H1 (cell line): ENCODE measurements at regions of chr1 and their contacts with region 1.

Region 1: DNA sequence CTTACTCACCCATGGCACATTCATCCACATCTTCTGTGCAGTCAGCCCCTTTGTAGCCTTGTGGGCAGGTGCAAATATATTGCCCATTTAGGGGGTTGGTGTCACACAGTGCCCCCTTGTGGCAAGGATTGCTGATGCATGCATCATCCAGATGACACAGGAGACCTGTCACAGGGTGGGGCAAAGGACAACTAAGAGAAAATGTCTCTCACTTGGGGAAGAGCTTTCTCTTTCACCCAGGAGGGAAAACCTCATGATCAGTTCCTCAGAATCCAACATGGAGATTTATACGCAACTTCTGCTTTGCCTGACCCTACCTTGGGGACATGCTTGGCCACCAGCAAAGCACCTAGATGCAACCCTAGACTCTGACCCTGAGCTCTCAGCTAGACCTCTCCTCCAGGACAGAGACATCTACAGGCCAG is 71.8 kb upstream of the ADAM30 start:
- DNase-seq: peak; percentile 15 to 86
- H3K4me3 ChIP-seq: no peak overlapping the region
- H3K27ac ChIP-seq: no peak overlapping the region
- H3K4me1 ChIP-seq: no peaks in the 10 kb centered on the region
- H3K27me3 ChIP-seq: no peaks in the 10 kb centered on the region
- CTCF ChIP-seq: peak; percentile 78 to 88 (median 86)
- EP300 ChIP-seq: no peak
- POLR2A ChIP-seq: no peak
- RAD21 ChIP-seq: peak; percentile 64 to 68

Region 2: DNA sequence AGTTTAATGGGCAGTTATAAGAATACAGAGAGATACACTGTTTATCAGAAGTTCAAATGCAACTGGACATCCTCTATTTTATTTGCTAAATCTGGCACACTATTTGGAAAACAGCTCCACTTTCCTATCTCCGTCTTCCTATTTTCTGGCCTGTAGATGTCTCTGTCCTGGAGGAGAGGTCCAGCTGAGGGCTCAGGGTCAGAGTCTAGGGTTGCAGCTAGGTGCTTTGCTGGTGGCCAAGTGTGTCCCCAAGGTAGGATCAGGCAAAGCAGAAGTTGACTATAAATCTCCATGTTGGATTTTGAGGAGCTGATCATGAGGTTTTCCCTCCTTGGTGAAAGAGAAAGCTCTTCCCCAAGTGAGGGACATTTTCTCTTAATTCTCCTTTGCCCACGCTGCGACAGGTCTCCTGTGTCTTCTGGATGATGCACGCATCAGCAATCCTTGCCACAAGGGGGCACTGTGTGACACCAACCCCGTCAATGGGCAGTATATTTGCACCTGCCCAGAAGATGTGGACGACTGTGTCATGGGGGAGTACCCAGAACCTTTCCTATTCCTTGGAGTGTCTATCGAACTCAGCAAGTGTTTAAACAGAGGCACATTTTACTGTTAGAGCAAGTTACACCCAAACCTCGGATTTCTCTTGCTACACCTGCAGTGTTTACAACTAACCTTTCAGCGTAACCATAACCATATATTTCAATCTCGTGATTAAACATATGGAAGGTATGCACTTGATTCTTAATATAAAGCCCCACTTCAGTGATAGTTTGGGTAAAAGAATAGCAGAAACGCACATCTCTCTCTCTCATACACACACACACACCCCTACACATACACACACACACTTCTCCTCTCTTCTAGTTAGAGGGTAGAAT is 81.9 kb before region 1 on chr1:
- CTCF ChIA-PET with region 1: interaction called, 18 read pairs
- POLR2A ChIA-PET with region 1: no interaction called
- DNase-seq: peak in 1 of 2 experiments; percentile 88
- H3K4me3 ChIP-seq: no peak overlapping the region
- H3K27ac ChIP-seq: no peak overlapping the region
- H3K4me1 ChIP-seq: no peaks in the 10 kb centered on the region
- H3K27me3 ChIP-seq: no peaks in the 10 kb centered on the region
- CTCF ChIP-seq: peak; percentile 82 to 94 (median 88)
- EP300 ChIP-seq: no peak
- POLR2A ChIP-seq: no peak
- RAD21 ChIP-seq: peak; percentile 72 to 79

Region 3: DNA sequence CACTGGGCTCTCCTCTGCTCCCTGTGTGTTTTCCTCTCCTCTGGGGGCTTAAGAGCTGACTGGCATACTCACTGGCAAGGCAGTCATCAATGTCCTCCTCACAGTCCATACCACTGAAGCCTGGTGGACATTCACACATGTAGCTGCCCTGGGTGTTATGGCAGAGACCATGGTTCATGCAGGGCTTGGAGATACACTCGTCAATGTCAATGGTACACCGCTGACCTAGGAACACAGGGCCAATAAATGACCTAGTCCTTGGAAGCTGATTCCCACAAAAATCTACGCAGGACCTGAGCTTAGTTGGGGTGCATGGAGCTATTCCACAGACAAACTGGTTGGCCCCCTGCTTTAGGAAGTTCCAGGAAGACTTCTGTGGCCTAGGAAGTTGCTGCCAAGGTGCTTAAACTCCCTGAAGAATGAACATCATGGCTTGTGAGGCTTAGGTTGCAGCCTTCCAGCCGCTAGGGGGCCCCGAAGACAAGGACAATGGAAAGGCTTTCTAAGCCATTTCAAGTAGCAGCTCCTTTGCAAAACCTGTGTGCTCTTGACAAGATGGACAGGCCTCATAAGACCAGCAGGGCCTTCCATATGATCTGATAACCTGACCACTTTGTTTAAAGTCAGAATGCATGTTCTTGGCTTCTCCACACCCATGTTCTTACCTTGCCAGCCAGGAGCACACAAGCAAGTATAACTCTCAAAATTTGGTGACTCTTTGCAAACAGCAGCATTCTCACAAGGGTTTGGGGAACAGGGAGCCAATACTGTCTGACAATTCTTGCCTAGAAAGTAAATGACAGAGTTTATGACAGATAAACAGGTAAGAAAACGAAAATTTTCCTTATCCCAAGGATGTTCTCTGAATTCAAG is 19.5 kb before region 1 on chr1:
- CTCF ChIA-PET with region 1: interaction called, 14 read pairs
- POLR2A ChIA-PET with region 1: no interaction called
- DNase-seq: peak; percentile 57 to 86
- H3K4me3 ChIP-seq: no peak overlapping the region
- H3K27ac ChIP-seq: no peak overlapping the region
- H3K4me1 ChIP-seq: no peaks in the 10 kb centered on the region
- H3K27me3 ChIP-seq: no peaks in the 10 kb centered on the region
- CTCF ChIP-seq: peak; percentile 72 to 95 (median 89)
- EP300 ChIP-seq: no peak
- POLR2A ChIP-seq: no peak
- RAD21 ChIP-seq: peak; percentile 88 to 93

Region 4: GRCh38 chr1:119956306-119956705 is 11.8 kb before region 1 on chr1:
- CTCF ChIA-PET with region 1: interaction called, 14 read pairs
- POLR2A ChIA-PET with region 1: no interaction called
- DNase-seq: no peak
- H3K4me3 ChIP-seq: no peak overlapping the region
- H3K27ac ChIP-seq: no peak overlapping the region
- H3K4me1 ChIP-seq: no peaks in the 10 kb centered on the region
- H3K27me3 ChIP-seq: no peaks in the 10 kb centered on the region
- CTCF ChIP-seq: no peak
- EP300 ChIP-seq: no peak
- POLR2A ChIP-seq: no peak
- RAD21 ChIP-seq: no peak

Region 5: GRCh38 chr1:119987112-119987511 is 19.0 kb after region 1 on chr1:
- CTCF ChIA-PET with region 1: interaction called, 22 read pairs
- POLR2A ChIA-PET with region 1: no interaction called
- DNase-seq: no peak
- H3K4me3 ChIP-seq: no peak overlapping the region
- H3K27ac ChIP-seq: no peak overlapping the region
- H3K4me1 ChIP-seq: peaks cover 0 to 4% (median 0%) of the 10 kb centered on the region in 4 experiments; a peak in 1 of 7 replicates
- H3K27me3 ChIP-seq: no peaks in the 10 kb centered on the region
- CTCF ChIP-seq: no peak
- EP300 ChIP-seq: no peak
- POLR2A ChIP-seq: no peak
- RAD21 ChIP-seq: no peak